CD4-positive, alpha-beta T cell (primary cell): ENCODE measurements at regions of chr15 and their contacts with region 1.

Region 1: GRCh38 chr15:31326156-31326732 is 391 bp upstream of the KLF13 start:
- DNase-seq: peak; percentile 98 to 100 (median 100)
- ATAC-seq: peak; percentile 69
- H3K4me3 ChIP-seq: peak overlapping the region; percentile 59
- H3K4me3 Mint-ChIP-seq: peak overlapping the region; percentile 90
- H3K27ac ChIP-seq: peak overlapping the region; percentile 71 to 95
- H3K27ac Mint-ChIP-seq: peak overlapping the region; percentile 92
- H3K4me1 ChIP-seq: peaks cover 43% of the 10 kb centered on the region
- H3K4me1 Mint-ChIP-seq: peaks cover 64% of the 10 kb centered on the region
- H3K27me3 ChIP-seq: no peaks in the 10 kb centered on the region
- H3K27me3 Mint-ChIP-seq: no peaks in the 10 kb centered on the region
- CTCF ChIP-seq: no peak

Region 2: DNA sequence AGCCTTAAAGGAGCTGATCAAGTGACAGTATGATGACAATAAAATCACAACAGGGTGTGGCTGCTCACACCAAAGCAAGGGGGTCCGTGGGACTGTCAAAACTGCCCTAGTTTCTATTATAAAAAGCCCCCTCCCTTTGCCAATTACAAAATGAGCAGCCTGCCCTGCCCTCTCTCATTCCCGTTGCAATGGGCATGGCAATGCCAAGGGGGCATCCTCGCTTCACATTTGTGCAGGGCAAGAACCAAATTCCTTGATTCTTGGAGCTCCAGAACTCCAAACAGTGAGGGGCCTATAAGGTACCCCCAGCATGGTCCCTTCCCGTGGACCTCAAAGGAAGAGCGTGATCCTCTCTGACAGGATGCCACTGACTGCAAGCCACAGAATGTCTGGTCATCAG is 119.9 kb before region 1 on chr15:
- CTCF ChIA-PET with region 1: no interaction called
- POLR2A ChIA-PET with region 1: interaction called, 28 read pairs
- intact Hi-C with region 1: loop called in 1 of 2 experiments (anchors 10 kb)
- DNase-seq: no peak
- ATAC-seq: no peak
- H3K4me3 ChIP-seq: no peak overlapping the region
- H3K4me3 Mint-ChIP-seq: no peak overlapping the region
- H3K27ac ChIP-seq: no peak overlapping the region
- H3K27ac Mint-ChIP-seq: no peak overlapping the region
- H3K4me1 ChIP-seq: peaks cover 41% of the 10 kb centered on the region
- H3K4me1 Mint-ChIP-seq: peaks cover 39% of the 10 kb centered on the region
- H3K27me3 ChIP-seq: no peaks in the 10 kb centered on the region
- H3K27me3 Mint-ChIP-seq: no peaks in the 10 kb centered on the region
- CTCF ChIP-seq: no peak

Region 3: GRCh38 chr15:31265871-31266711 is 60.2 kb before region 1 on chr15:
- CTCF ChIA-PET with region 1: interaction called, 8 read pairs
- POLR2A ChIA-PET with region 1: interaction called, 234 read pairs
- intact Hi-C with region 1: loop called in 1 of 2 experiments (anchors 1 kb)
- DNase-seq: peak; percentile 58 to 90 (median 76)
- ATAC-seq: peak; percentile 86
- H3K4me3 ChIP-seq: no peak overlapping the region
- H3K4me3 Mint-ChIP-seq: peak overlapping the region; percentile 71
- H3K27ac ChIP-seq: peak overlapping the region; percentile 79 to 85
- H3K27ac Mint-ChIP-seq: peak overlapping the region; percentile 98
- H3K4me1 ChIP-seq: peaks cover 97% of the 10 kb centered on the region
- H3K4me1 Mint-ChIP-seq: peaks cover 98% of the 10 kb centered on the region
- H3K27me3 ChIP-seq: no peaks in the 10 kb centered on the region
- H3K27me3 Mint-ChIP-seq: no peaks in the 10 kb centered on the region
- CTCF ChIP-seq: no peak

Region 4: GRCh38 chr15:31296646-31297574 is 29.3 kb before region 1 on chr15:
- CTCF ChIA-PET with region 1: no interaction called
- POLR2A ChIA-PET with region 1: no interaction called
- intact Hi-C with region 1: no loop called
- DNase-seq: no peak
- ATAC-seq: no peak
- H3K4me3 ChIP-seq: no peak overlapping the region
- H3K4me3 Mint-ChIP-seq: no peak overlapping the region
- H3K27ac ChIP-seq: no peak overlapping the region
- H3K27ac Mint-ChIP-seq: no peak overlapping the region
- H3K4me1 ChIP-seq: no peaks in the 10 kb centered on the region
- H3K4me1 Mint-ChIP-seq: peaks cover under 1% of the 10 kb centered on the region
- H3K27me3 ChIP-seq: no peaks in the 10 kb centered on the region
- H3K27me3 Mint-ChIP-seq: peaks cover 5% of the 10 kb centered on the region
- CTCF ChIP-seq: no peak

Region 5: GRCh38 chr15:31344823-31345605 is 18.8 kb after region 1 on chr15:
- CTCF ChIA-PET with region 1: interaction called, 3 read pairs
- POLR2A ChIA-PET with region 1: interaction called, 566 read pairs
- intact Hi-C with region 1: loop called (anchors 2 kb)
- DNase-seq: peak in 3 of 14 experiments; percentile 46 to 50 (median 47)
- ATAC-seq: no peak
- H3K4me3 ChIP-seq: peak overlapping the region; percentile 47
- H3K4me3 Mint-ChIP-seq: peak overlapping the region; percentile 90
- H3K27ac ChIP-seq: peak overlapping the region; percentile 81 to 86
- H3K27ac Mint-ChIP-seq: peak overlapping the region; percentile 90
- H3K4me1 ChIP-seq: peaks cover 100% of the 10 kb centered on the region
- H3K4me1 Mint-ChIP-seq: peaks cover 100% of the 10 kb centered on the region
- H3K27me3 ChIP-seq: no peaks in the 10 kb centered on the region
- H3K27me3 Mint-ChIP-seq: no peaks in the 10 kb centered on the region
- CTCF ChIP-seq: no peak

Region 6: DNA sequence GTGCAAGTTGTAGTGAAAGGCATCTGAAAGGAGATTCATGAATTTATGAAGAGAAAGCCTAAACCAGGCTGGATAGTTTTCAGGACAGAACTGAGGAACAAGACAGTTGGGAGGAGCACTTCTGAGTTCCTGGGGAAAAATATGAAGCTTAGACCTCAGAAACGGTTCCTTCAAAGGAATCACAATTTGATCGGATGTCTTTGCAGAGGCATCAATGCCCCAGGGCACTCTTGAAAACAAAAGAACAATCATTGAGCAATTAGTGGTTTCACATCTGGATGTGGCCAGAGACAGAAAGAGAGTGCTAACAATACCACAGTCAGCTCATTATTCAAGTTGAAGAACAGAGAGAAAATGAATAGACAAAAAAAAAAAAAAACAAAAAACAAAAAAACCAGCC is 86.6 kb after region 1 on chr15:
- CTCF ChIA-PET with region 1: no interaction called
- POLR2A ChIA-PET with region 1: no interaction called
- intact Hi-C with region 1: no loop called
- DNase-seq: no peak
- ATAC-seq: no peak
- H3K4me3 ChIP-seq: no peak overlapping the region
- H3K4me3 Mint-ChIP-seq: no peak overlapping the region
- H3K27ac ChIP-seq: no peak overlapping the region
- H3K27ac Mint-ChIP-seq: no peak overlapping the region
- H3K4me1 ChIP-seq: no peaks in the 10 kb centered on the region
- H3K4me1 Mint-ChIP-seq: no peaks in the 10 kb centered on the region
- H3K27me3 ChIP-seq: no peaks in the 10 kb centered on the region
- H3K27me3 Mint-ChIP-seq: no peaks in the 10 kb centered on the region
- CTCF ChIP-seq: no peak

Region 7: DNA sequence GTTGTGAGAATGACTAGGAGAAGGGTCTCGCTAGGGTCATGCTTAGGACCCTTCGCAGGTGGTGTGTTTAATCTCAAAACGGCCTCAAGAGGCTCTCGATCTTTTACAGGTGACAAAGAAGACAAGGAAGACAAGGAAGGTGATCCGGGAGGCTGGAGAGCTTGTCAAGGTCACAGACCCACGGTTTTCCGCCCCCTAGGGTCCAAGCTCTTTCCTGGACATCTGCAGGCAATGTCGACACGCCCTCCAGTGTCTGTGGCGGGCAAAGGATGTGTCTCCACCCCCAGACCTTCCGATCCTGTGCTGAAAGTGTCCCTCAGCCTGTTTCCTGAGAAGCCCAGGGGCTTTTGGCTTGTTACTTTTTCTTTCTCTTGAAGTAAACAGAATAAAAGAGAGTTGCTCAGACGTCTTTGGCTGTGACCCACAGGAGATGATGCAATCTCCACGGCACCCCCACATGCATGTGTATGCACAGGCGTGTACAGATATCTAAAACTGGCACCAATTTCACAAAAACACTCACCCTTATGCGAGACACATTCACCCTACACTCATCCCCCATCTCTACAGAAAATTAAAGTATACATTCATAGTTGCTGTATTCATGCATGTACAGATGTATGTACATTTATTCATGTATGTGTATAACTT is 109.1 kb after region 1 on chr15:
- CTCF ChIA-PET with region 1: interaction called, 4 read pairs
- POLR2A ChIA-PET with region 1: interaction called, 104 read pairs
- intact Hi-C with region 1: loop called (anchors 1 to 2 kb)
- DNase-seq: peak; percentile 61 to 93 (median 80)
- ATAC-seq: peak; percentile 75
- H3K4me3 ChIP-seq: peak overlapping the region; percentile 55
- H3K4me3 Mint-ChIP-seq: peak overlapping the region; percentile 84
- H3K27ac ChIP-seq: peak overlapping the region; percentile 88 to 92
- H3K27ac Mint-ChIP-seq: peak overlapping the region; percentile 98
- H3K4me1 ChIP-seq: peaks cover 78% of the 10 kb centered on the region
- H3K4me1 Mint-ChIP-seq: peaks cover 76% of the 10 kb centered on the region
- H3K27me3 ChIP-seq: no peaks in the 10 kb centered on the region
- H3K27me3 Mint-ChIP-seq: no peaks in the 10 kb centered on the region
- CTCF ChIP-seq: peak; percentile 45

Region 8: DNA sequence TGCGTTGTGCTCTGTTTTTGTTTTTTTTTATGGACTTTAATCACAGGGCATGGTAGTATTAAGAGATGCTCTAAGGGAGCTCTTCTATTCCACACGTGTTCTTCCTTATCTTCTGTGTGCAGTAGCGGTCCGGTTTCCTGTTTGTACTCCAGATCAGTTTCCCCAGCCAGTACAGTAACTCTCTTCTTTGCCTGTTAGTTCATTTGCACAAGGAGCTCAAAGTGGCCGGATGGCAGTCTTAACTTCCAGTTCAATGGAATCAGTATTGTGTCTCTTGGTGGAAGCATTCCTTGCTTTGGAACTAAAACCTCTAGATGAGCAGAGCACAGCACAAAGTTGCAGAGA is 122.4 kb after region 1 on chr15:
- CTCF ChIA-PET with region 1: no interaction called
- POLR2A ChIA-PET with region 1: no interaction called
- intact Hi-C with region 1: no loop called
- DNase-seq: no peak
- ATAC-seq: no peak
- H3K4me3 ChIP-seq: no peak overlapping the region
- H3K4me3 Mint-ChIP-seq: no peak overlapping the region
- H3K27ac ChIP-seq: no peak overlapping the region
- H3K27ac Mint-ChIP-seq: no peak overlapping the region
- H3K4me1 ChIP-seq: peaks cover 14% of the 10 kb centered on the region
- H3K4me1 Mint-ChIP-seq: peaks cover 9% of the 10 kb centered on the region
- H3K27me3 ChIP-seq: no peaks in the 10 kb centered on the region
- H3K27me3 Mint-ChIP-seq: no peaks in the 10 kb centered on the region
- CTCF ChIP-seq: no peak

Region 9: DNA sequence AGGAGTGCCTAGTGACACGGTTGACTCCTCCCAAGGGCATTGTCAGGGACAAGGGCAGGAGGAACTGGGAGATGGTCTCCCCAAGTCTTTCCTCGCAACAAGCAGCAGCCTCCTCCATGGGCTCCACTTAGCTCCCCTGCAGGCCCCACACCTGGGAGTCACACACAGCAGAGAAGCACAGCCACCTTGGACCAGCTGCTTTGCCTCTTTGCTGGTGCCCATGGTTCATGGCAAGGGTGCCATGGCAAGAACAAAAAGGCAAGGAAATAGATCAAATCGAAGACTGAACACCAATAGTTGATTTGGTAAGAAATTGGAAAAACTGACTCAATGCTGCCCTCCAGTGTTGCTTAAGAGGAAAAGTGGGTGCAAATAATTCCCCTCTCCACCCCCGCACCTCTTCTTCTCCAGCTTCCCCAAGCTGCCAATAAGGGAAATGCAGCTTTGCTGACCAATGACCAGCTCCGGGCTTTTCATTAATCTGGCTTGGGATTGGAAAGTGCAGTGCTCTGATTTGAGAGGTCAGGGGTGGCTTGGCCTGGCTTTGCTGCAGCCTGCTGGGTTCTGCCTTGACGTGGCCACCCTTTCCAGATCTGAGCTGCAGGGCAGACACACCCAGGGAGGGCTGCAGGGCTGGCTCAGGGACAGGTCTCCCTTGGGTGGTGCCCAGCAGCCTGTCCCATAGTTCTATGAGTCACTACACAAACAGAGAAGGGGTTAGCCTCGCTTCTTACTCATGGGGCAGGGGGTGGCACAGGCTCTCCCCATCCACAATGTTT is 162.4 kb after region 1 on chr15:
- CTCF ChIA-PET with region 1: interaction called, 23 read pairs
- POLR2A ChIA-PET with region 1: interaction called, 68 read pairs
- intact Hi-C with region 1: loop called (anchors 1 to 2 kb)
- DNase-seq: peak in 9 of 14 experiments; percentile 16 to 89 (median 33)
- ATAC-seq: peak; percentile 64
- H3K4me3 ChIP-seq: no peak overlapping the region
- H3K4me3 Mint-ChIP-seq: peak overlapping the region; percentile 58
- H3K27ac ChIP-seq: no peak overlapping the region
- H3K27ac Mint-ChIP-seq: no peak overlapping the region
- H3K4me1 ChIP-seq: peaks cover 37% of the 10 kb centered on the region
- H3K4me1 Mint-ChIP-seq: peaks cover 29% of the 10 kb centered on the region
- H3K27me3 ChIP-seq: no peaks in the 10 kb centered on the region
- H3K27me3 Mint-ChIP-seq: no peaks in the 10 kb centered on the region
- CTCF ChIP-seq: peak; percentile 81